ENCODE measurements at regions of chr3 and their contacts with region 1.

Region 1: GRCh38 chr3:119538772-119539171 is 20.6 kb downstream of the CD80 start:
- DNase-seq: peak; percentile 52
- ATAC-seq: peak; percentile 78
- H3K4me3 ChIP-seq: no peak overlapping the region
- H3K4me3 Mint-ChIP-seq: peak overlapping the region; percentile 71
- H3K27ac ChIP-seq: peak overlapping the region; percentile 57 to 83
- H3K27ac Mint-ChIP-seq: peak overlapping the region; percentile 80
- H3K4me1 ChIP-seq: peaks cover 24 to 26% of the 10 kb centered on the region in 2 donors
- H3K4me1 Mint-ChIP-seq: peaks cover 45% of the 10 kb centered on the region
- H3K27me3 ChIP-seq: no peaks in the 10 kb centered on the region
- H3K27me3 Mint-ChIP-seq: no peaks in the 10 kb centered on the region
- CTCF ChIP-seq: no peak

Region 2: GRCh38 chr3:119457246-119457645 is 81.5 kb before region 1 on chr3:
- CTCF ChIA-PET with region 1: no interaction called
- POLR2A ChIA-PET with region 1: no interaction called
- intact Hi-C with region 1: no loop called
- DNase-seq: no peak
- ATAC-seq: no peak
- H3K4me3 ChIP-seq: no peak overlapping the region
- H3K4me3 Mint-ChIP-seq: no peak overlapping the region
- H3K27ac ChIP-seq: no peak overlapping the region
- H3K27ac Mint-ChIP-seq: no peak overlapping the region
- H3K4me1 ChIP-seq: peaks cover 4% of the 10 kb centered on the region in 2 donors
- H3K4me1 Mint-ChIP-seq: peaks cover 19% of the 10 kb centered on the region
- H3K27me3 ChIP-seq: no peaks in the 10 kb centered on the region
- H3K27me3 Mint-ChIP-seq: no peaks in the 10 kb centered on the region
- CTCF ChIP-seq: no peak

Region 3: GRCh38 chr3:119524931-119525662 is 13.7 kb before region 1 on chr3:
- CTCF ChIA-PET with region 1: interaction called, 5 read pairs
- POLR2A ChIA-PET with region 1: no interaction called
- intact Hi-C with region 1: loop called (anchors 2 kb)
- DNase-seq: peak; percentile 46
- ATAC-seq: peak; percentile 60
- H3K4me3 ChIP-seq: no peak overlapping the region
- H3K4me3 Mint-ChIP-seq: no peak overlapping the region
- H3K27ac ChIP-seq: peak overlapping the region in 1 of 2 donors; percentile 14
- H3K27ac Mint-ChIP-seq: no peak overlapping the region
- H3K4me1 ChIP-seq: no peaks in the 10 kb centered on the region
- H3K4me1 Mint-ChIP-seq: no peaks in the 10 kb centered on the region
- H3K27me3 ChIP-seq: no peaks in the 10 kb centered on the region
- H3K27me3 Mint-ChIP-seq: no peaks in the 10 kb centered on the region
- CTCF ChIP-seq: peak; percentile 54

Measured in B cell (primary cell).